Heart left ventricle (tissue), 16 donors: ENCODE measurements at regions of chr6 and their contacts with region 1.

Region 1: GRCh38 chr6:28838634-28839442 is 84.9 kb downstream of the TRIM27 start:
- DNase-seq: peak; percentile 70 to 88 (median 82)
- ATAC-seq: peak; percentile 69 to 96 (median 92)
- H3K4me3 ChIP-seq: peak overlapping the region; percentile 41 to 76 (median 63)
- H3K27ac ChIP-seq: peak overlapping the region in 8 of 12 donors; percentile 14 to 81 (median 44)
- H3K4me1 ChIP-seq: peaks cover 0 to 24% (median 12%) of the 10 kb centered on the region in 12 donors
- H3K27me3 ChIP-seq: peaks cover 0 to 66% (median 7%) of the 10 kb centered on the region in 9 donors
- CTCF ChIP-seq: peak; percentile 26 to 67 (median 53)
- POLR2A ChIP-seq: no peak

Region 2: GRCh38 chr6:28802417-28803336 is 36.2 kb before region 1 on chr6:
- intact Hi-C with region 1: no loop called
- DNase-seq: no peak
- ATAC-seq: no peak
- H3K4me3 ChIP-seq: no peak overlapping the region
- H3K27ac ChIP-seq: no peak overlapping the region
- H3K4me1 ChIP-seq: no peaks in the 10 kb centered on the region
- H3K27me3 ChIP-seq: peaks cover 0 to 89% (median 48%) of the 10 kb centered on the region in 9 donors
- CTCF ChIP-seq: no peak
- POLR2A ChIP-seq: no peak

Region 3: GRCh38 chr6:28863604-28864320 is 24.9 kb after region 1 on chr6:
- intact Hi-C with region 1: loop called in 2 of 10 experiments (anchors 1 to 2 kb)
- DNase-seq: peak; percentile 55 to 78 (median 59)
- ATAC-seq: peak; percentile 79 to 90 (median 88)
- H3K4me3 ChIP-seq: peak overlapping the region; percentile 42 to 93 (median 78)
- H3K27ac ChIP-seq: peak overlapping the region in 7 of 12 donors; percentile 0 to 77 (median 41)
- H3K4me1 ChIP-seq: peaks cover 0 to 19% (median 7%) of the 10 kb centered on the region in 12 donors
- H3K27me3 ChIP-seq: peaks cover 0 to 10% (median 0%) of the 10 kb centered on the region in 9 donors
- CTCF ChIP-seq: no peak
- POLR2A ChIP-seq: no peak

Region 4: DNA sequence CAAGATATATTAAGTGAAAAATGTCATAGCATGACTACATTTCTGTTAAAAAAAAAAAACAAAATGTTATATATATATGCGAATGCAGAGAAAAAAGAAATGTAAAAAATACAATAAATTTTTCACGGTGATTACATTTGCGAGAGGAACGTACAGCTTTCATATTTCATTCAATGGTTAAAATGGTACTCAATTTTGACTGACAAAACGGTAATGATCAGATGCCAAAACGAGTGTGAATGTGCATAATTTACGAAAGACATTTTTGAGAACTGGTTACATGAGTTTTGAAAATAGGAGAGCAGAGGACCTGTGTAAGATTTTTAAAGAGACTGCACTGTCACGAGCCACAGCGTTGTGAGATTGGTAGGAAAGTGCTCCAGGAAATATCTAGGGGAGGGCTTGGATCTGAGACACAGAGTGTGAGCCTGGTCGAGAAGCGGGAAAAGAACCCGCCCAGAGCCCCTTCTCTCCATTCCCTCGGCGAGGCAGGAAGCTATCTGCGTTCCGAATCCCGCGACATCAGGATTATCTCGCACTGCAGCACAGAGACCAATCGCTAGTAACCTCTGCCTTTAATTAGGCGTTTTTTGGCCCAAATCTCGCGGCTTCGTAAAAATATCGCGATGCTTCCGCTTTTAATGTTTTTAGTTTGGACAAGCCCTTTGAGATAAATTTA is 56.4 kb after region 1 on chr6:
- intact Hi-C with region 1: loop called in 2 of 10 experiments (anchors 2 kb)
- DNase-seq: peak; percentile 92 to 94 (median 92)
- ATAC-seq: peak; percentile 88 to 91 (median 90)
- H3K4me3 ChIP-seq: peak overlapping the region; percentile 51 to 87 (median 73)
- H3K27ac ChIP-seq: peak overlapping the region; percentile 80 to 99 (median 96)
- H3K4me1 ChIP-seq: peaks cover 0 to 18% (median 7%) of the 10 kb centered on the region in 12 donors
- H3K27me3 ChIP-seq: no peaks in the 10 kb centered on the region
- CTCF ChIP-seq: no peak
- POLR2A ChIP-seq: peak in 1 of 2 donors; percentile 81

Region 5: DNA sequence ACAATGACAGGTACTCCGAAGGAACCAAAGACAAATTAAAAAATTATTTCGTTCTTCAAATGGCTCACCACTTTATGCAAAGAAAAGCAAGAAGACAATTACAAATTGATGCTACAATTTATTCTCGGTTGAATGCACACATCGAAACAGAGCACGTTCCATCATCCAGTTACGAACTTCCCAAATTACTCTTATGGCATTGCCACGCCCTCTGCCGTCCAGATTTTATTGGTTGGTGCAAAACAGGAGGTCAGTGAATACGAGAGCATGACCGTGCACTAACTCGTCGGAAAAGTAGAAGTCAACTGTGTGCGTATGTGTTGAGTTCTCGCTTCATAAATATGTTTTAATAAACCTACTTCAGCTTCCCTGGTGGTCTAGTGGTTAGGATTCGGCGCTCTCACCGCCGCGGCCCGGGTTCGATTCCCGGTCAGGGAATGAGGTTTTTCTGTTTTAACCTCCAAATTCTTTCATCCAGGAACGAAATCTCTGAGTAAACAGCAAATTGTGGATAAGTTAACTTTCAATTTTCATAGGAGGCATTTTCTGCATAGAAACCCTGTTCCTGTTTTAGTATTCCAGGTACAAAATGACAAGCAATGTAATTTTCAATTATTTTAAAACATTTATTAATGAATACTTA is 143.1 kb after region 1 on chr6:
- intact Hi-C with region 1: loop called in 3 of 10 experiments (anchors 2 to 10 kb)
- DNase-seq: peak; percentile 70 to 85 (median 76)
- ATAC-seq: peak; percentile 74 to 85 (median 80)
- H3K4me3 ChIP-seq: peak overlapping the region; percentile 52 to 78 (median 68)
- H3K27ac ChIP-seq: peak overlapping the region; percentile 29 to 84 (median 73)
- H3K4me1 ChIP-seq: peaks cover 0 to 38% (median 6%) of the 10 kb centered on the region in 12 donors
- H3K27me3 ChIP-seq: peaks cover 0 to 15% (median 9%) of the 10 kb centered on the region in 9 donors
- CTCF ChIP-seq: peak in 7 of 12 donors; percentile 3 to 40 (median 13)
- POLR2A ChIP-seq: peak in 1 of 2 donors; percentile 10